ENCODE measurements at regions of chr11 and their contacts with region 1.

Region 1: DNA sequence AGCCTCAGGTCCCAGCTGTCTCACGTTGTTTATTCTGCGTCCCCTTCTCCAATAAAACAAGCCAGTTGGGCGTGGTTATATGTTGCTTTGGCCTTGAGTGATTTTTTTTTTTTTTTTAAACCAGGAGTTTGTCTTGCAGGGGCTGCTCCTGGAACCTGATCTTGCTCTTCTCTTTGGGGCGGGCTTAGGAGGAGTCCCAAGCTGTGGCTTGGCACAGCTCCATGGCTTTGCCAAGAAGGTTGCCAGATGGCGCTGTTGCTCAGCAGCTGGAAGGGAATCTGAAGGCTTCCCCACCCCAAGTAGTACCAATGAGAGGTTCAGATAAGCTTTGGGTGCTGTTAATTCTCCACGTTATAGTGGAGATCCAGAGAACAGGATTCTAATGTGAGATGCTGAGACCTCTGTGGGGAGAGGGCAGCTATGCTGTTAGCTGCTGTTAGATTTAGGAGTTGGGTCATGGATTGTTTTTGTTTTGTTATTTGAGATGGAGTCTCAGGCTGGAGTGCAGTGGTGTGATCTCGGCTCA is 2.0 kb upstream of the FERMT3 start:
- DNase-seq: peak; percentile 90
- ATAC-seq: peak; percentile 76
- H3K4me3 ChIP-seq: no peak overlapping the region
- H3K27ac ChIP-seq: no peak overlapping the region
- H3K4me1 ChIP-seq: peaks cover 47% of the 10 kb centered on the region
- H3K27me3 ChIP-seq: no peaks in the 10 kb centered on the region
- CTCF ChIP-seq: peak; percentile 76

Region 2: DNA sequence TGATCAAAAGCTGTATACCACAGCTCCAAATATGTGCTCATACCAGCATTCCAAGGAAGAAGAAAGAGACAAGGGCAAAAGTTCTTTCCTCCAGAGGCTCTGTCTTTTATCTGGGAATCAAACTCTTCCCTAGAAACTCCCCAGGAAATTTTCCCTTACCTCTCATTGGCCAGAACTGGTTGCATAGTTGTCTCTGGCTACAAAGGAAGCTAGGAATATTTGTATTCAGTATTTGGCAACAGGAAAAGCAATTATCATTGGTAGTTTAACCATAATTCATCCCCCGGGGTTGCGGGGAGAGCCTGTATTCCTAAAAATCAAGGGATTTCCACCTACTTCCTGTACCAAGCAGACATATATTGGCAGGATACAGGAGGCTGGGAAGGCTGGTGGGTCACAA is 425.5 kb before region 1 on chr11:
- intact Hi-C with region 1: no loop called
- DNase-seq: no peak
- ATAC-seq: no peak
- H3K4me3 ChIP-seq: no peak overlapping the region
- H3K27ac ChIP-seq: no peak overlapping the region
- H3K4me1 ChIP-seq: no peaks in the 10 kb centered on the region
- H3K27me3 ChIP-seq: no peaks in the 10 kb centered on the region
- CTCF ChIP-seq: no peak

Region 3: DNA sequence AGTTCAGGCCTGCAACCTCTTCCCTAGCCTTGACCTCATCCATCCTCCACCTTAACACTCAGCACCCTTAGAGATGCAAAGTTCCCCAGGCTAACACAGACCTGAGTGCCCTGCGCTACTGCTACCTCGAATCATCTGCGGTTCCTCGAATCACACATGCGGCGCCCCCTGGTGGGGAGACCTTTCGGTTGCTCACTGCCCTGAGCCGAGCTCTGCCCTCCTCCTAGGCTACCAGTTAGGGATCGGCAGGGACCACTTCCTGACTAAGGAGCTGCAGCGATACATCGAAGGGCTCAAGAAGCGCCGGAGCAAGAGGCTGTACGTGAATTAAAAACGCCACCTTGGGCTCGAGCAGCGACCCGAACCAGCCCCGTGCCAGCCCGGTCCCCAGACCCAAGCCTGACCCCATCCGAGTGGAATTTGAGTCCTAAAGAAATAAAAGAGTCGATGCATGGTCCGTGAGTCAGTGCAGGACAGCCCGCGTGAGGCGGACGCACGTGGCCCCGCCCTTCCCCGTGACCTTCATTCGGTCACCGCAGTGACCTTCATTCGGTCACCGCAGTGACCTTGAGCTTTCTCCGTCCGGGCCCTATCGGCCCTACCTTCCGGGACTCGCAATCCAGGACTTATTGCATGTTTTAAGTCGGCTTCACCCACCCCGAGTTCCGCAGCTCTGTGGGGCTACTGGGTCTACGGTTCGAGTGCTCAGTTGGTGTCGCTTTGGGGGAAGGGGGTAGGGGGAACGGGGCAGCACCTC is 100.0 kb after region 1 on chr11:
- intact Hi-C with region 1: loop called (anchors 5 kb)
- DNase-seq: peak; percentile 97
- ATAC-seq: peak; percentile 59
- H3K4me3 ChIP-seq: peak overlapping the region; percentile 70
- H3K27ac ChIP-seq: peak overlapping the region; percentile 94
- H3K4me1 ChIP-seq: peaks cover 31% of the 10 kb centered on the region
- H3K27me3 ChIP-seq: peaks cover 13% of the 10 kb centered on the region
- CTCF ChIP-seq: peak; percentile 92

Measured in upper lobe of right lung (tissue), 1 donor.